ENCODE measurements at regions of chr16 and their contacts with region 1.

Region 1: GRCh38 chr16:57576429-57576870 is 34.0 kb downstream of the ADGRG5 start:
- DNase-seq: peak; percentile 95
- ATAC-seq: peak; percentile 66
- H3K4me3 Mint-ChIP-seq: no peak overlapping the region
- H3K27ac Mint-ChIP-seq: peak overlapping the region; percentile 88
- H3K4me1 Mint-ChIP-seq: peaks cover 48% of the 10 kb centered on the region
- H3K27me3 Mint-ChIP-seq: no peaks in the 10 kb centered on the region
- CTCF ChIP-seq: peak; percentile 98

Region 2: GRCh38 chr16:57146735-57147134 is 429.7 kb before region 1 on chr16:
- CTCF ChIA-PET with region 1: no interaction called
- POLR2A ChIA-PET with region 1: no interaction called
- intact Hi-C with region 1: no loop called
- DNase-seq: no peak
- ATAC-seq: peak; percentile 35
- H3K4me3 Mint-ChIP-seq: no peak overlapping the region
- H3K27ac Mint-ChIP-seq: no peak overlapping the region
- H3K4me1 Mint-ChIP-seq: peaks cover 28% of the 10 kb centered on the region
- H3K27me3 Mint-ChIP-seq: no peaks in the 10 kb centered on the region
- CTCF ChIP-seq: no peak

Region 3: DNA sequence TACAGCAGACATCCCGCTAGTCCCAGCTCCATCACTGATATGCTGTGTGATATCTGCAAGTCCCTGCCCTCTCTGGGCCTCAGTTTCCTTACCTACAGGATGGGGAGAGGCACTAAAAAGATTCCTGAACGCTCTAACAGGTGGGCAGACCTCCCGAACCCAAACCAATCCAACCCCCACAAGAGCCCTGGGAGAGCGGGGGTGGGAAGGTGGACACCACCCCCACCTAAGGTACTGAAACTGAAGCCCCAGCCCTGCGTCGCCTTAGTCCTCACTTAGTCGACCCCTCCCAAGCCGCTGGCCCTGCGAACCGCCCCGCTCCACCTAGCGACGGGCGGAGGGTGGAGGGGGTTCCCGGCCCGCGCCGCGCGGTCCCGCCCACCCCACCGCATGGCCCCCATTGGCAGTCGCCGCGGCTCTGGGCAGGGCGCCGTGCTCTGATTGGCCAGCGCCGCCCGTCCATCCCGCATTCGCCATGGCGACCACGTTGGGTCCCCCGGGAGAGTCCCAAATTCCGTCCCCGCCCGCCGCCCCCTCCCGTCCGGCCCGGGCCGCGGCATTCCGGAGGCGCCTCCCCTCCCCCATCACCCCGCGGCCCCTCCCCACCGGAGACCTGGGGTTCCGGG is 40.7 kb before region 1 on chr16:
- CTCF ChIA-PET with region 1: interaction called, 22 read pairs
- POLR2A ChIA-PET with region 1: no interaction called
- intact Hi-C with region 1: no loop called
- DNase-seq: peak; percentile 95
- ATAC-seq: peak; percentile 78
- H3K4me3 Mint-ChIP-seq: peak overlapping the region; percentile 81
- H3K27ac Mint-ChIP-seq: peak overlapping the region; percentile 92
- H3K4me1 Mint-ChIP-seq: peaks cover 73% of the 10 kb centered on the region
- H3K27me3 Mint-ChIP-seq: no peaks in the 10 kb centered on the region
- CTCF ChIP-seq: no peak

Region 4: DNA sequence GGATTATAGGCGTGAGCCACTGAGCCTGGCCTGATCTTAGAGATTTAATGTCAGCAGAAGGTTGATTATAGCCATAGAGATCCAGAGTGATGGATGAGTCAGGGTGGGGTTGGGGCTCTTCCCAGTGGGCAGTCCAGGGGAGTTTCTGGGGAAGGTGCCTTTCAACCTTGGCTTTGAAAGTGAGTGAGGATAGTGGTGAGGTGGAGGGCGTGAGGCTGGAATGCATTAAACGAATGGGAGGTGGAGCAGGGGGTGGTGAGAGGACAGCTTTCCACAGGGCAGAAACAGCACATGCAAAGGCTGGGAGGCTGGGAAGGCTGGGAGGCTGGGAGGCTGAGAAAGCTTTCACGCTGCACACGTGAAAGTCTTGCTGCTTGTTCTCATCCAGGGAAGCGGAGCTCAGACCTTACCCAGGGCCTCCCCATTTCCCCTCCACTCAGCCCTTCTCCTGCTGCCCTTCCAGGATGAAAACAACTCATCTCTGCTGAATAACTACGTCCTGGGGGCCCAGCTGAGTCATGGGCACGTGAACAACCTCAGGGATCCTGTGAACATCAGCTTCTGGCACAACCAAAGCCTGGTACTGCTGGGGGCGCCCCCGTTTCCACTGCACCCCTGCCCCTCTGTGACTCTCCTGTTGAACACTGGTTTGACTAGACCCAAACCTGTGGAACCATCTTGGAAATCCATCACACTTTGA is 11.7 kb before region 1 on chr16:
- CTCF ChIA-PET with region 1: interaction called, 16 read pairs
- POLR2A ChIA-PET with region 1: interaction called, 3 read pairs
- intact Hi-C with region 1: no loop called
- DNase-seq: no peak
- ATAC-seq: no peak
- H3K4me3 Mint-ChIP-seq: no peak overlapping the region
- H3K27ac Mint-ChIP-seq: no peak overlapping the region
- H3K4me1 Mint-ChIP-seq: peaks cover 5% of the 10 kb centered on the region
- H3K27me3 Mint-ChIP-seq: no peaks in the 10 kb centered on the region
- CTCF ChIP-seq: no peak

Region 5: GRCh38 chr16:57609541-57610401 is 33.3 kb after region 1 on chr16:
- CTCF ChIA-PET with region 1: interaction called, 74 read pairs
- POLR2A ChIA-PET with region 1: interaction called, 18 read pairs
- intact Hi-C with region 1: loop called (anchors 2 kb)
- DNase-seq: peak; percentile 95
- ATAC-seq: peak; percentile 93
- H3K4me3 Mint-ChIP-seq: peak overlapping the region; percentile 49
- H3K27ac Mint-ChIP-seq: peak overlapping the region; percentile 93
- H3K4me1 Mint-ChIP-seq: peaks cover 68% of the 10 kb centered on the region
- H3K27me3 Mint-ChIP-seq: no peaks in the 10 kb centered on the region
- CTCF ChIP-seq: no peak

Region 6: GRCh38 chr16:57653936-57654335 is 77.5 kb after region 1 on chr16:
- CTCF ChIA-PET with region 1: interaction called, 265 read pairs
- POLR2A ChIA-PET with region 1: interaction called, 48 read pairs
- intact Hi-C with region 1: loop called (anchors 1 kb)
- DNase-seq: no peak
- ATAC-seq: no peak
- H3K4me3 Mint-ChIP-seq: no peak overlapping the region
- H3K27ac Mint-ChIP-seq: no peak overlapping the region
- H3K4me1 Mint-ChIP-seq: peaks cover 15% of the 10 kb centered on the region
- H3K27me3 Mint-ChIP-seq: no peaks in the 10 kb centered on the region
- CTCF ChIP-seq: no peak

Region 7: DNA sequence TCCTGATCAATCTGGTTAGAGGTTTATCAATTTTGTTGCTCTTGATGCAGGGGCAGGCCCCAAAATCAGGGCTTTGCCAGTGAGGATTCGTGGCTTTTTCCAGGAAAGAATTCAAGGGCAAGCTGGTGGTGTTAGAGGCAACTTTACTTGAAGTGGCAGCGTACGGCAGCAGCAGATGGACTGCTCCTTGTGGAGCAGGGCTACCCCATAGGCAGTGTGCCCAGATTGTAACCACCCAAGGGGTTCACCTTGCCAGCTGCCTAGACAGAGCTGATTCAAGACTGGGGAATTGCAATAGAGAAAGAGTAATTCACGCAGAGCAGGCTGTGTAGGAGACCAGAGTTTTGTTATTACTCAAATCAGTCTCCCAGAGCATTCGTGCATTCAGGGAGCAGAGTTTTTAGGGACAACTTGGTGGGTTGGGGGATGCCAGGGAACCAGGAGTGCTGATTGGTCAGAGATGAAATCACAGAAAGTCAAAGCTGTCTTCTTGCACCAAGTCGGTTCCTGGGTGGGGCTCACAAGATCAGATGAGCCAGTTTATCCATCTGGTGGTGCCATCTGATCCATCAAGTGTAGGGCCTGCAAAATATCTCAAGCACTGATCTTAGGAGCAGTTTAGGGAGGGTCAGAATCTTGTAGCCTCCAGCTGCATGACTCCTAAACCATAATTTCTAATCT is 135.0 kb after region 1 on chr16:
- CTCF ChIA-PET with region 1: interaction called, 23 read pairs
- POLR2A ChIA-PET with region 1: no interaction called
- intact Hi-C with region 1: no loop called
- DNase-seq: no peak
- ATAC-seq: no peak
- H3K4me3 Mint-ChIP-seq: no peak overlapping the region
- H3K27ac Mint-ChIP-seq: no peak overlapping the region
- H3K4me1 Mint-ChIP-seq: peaks cover 4% of the 10 kb centered on the region
- H3K27me3 Mint-ChIP-seq: peaks cover 3% of the 10 kb centered on the region
- CTCF ChIP-seq: no peak

Region 8: GRCh38 chr16:57757326-57757786 is 180.9 kb after region 1 on chr16:
- CTCF ChIA-PET with region 1: interaction called, 16 read pairs
- POLR2A ChIA-PET with region 1: no interaction called
- intact Hi-C with region 1: no loop called
- DNase-seq: peak; percentile 88
- ATAC-seq: peak; percentile 97
- H3K4me3 Mint-ChIP-seq: no peak overlapping the region
- H3K27ac Mint-ChIP-seq: no peak overlapping the region
- H3K4me1 Mint-ChIP-seq: peaks cover 4% of the 10 kb centered on the region
- H3K27me3 Mint-ChIP-seq: no peaks in the 10 kb centered on the region
- CTCF ChIP-seq: peak; percentile 93